ENCODE measurements at regions of chr7 and their contacts with region 1.

Region 1: DNA sequence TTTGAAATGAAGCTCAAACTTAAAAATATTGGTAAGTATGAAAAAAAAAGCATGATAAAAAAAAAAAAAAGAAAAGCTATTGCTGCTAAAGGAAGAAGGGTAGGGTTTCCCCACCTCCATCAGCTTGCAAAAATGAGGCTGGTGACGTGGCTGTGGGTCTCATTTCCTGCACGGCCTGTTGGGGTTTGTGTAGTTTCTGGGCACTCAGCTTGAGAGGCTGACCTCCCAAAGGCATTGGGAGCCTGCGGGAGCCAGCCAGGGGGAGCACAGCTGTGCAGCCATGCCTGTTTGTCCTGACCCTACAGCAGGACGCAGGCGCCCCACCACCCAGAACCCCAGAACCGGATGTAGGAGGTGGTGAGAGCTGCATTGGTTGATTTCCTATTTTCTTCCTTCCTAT is 48.8 kb upstream of the CARD11 start:
- DNase-seq: peak; percentile 35 to 87 (median 82)
- ATAC-seq: peak; percentile 87
- H3K4me3 ChIP-seq: peak overlapping the region; percentile 4
- H3K4me3 Mint-ChIP-seq: peak overlapping the region; percentile 43 to 94 (median 72)
- H3K27ac ChIP-seq: peak overlapping the region; percentile 81
- H3K27ac Mint-ChIP-seq: peak overlapping the region; percentile 93 to 100 (median 99)
- H3K4me1 ChIP-seq: peaks cover 68 to 76% of the 10 kb centered on the region in 2 donors
- H3K4me1 Mint-ChIP-seq: peaks cover 35 to 86% (median 72%) of the 10 kb centered on the region in 7 donors
- H3K27me3 ChIP-seq: no peaks in the 10 kb centered on the region
- H3K27me3 Mint-ChIP-seq: peaks cover 0 to 2% (median 0%) of the 10 kb centered on the region in 5 donors

Region 2: GRCh38 chr7:2903682-2904162 is 188.7 kb before region 1 on chr7:
- CTCF ChIA-PET with region 1: no interaction called
- POLR2A ChIA-PET with region 1: no interaction called
- intact Hi-C with region 1: loop called in 1 of 2 experiments (anchors 1 kb)
- DNase-seq: no peak
- ATAC-seq: peak; percentile 10
- H3K4me3 ChIP-seq: no peak overlapping the region
- H3K4me3 Mint-ChIP-seq: no peak overlapping the region
- H3K27ac ChIP-seq: no peak overlapping the region
- H3K27ac Mint-ChIP-seq: peak overlapping the region in 4 of 9 donors; percentile 47 to 78 (median 65)
- H3K4me1 ChIP-seq: peaks cover 0 to 19% of the 10 kb centered on the region in 2 donors
- H3K4me1 Mint-ChIP-seq: peaks cover 0 to 40% (median 2%) of the 10 kb centered on the region in 7 donors
- H3K27me3 ChIP-seq: no peaks in the 10 kb centered on the region
- H3K27me3 Mint-ChIP-seq: no peaks in the 10 kb centered on the region

Region 3: DNA sequence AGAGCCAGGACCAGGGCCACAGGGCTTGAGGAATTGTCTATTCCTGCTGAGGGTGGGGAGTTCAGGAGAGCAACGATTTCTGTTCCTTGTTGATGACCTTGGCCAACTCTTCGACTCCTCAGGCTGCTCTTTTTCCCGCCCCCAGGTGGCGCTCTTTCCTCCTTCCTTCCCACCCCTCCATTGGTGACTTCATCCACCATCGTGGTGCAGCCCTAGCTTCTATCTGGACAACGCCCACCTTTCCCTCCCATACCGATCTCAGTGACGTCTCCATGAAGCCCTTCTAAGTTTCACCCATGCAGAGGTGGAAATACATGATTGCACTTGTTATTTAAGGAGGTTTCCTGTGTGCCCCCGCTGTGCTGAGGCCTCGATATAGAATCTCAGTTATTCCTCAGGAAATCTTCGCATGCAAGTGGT is 26.7 kb before region 1 on chr7:
- CTCF ChIA-PET with region 1: interaction called, 13 read pairs
- POLR2A ChIA-PET with region 1: interaction called, 31 read pairs
- intact Hi-C with region 1: loop called (anchors 1 to 2 kb)
- DNase-seq: peak; percentile 32 to 61 (median 50)
- ATAC-seq: peak; percentile 58
- H3K4me3 ChIP-seq: peak overlapping the region; percentile 28
- H3K4me3 Mint-ChIP-seq: peak overlapping the region; percentile 56 to 85 (median 72)
- H3K27ac ChIP-seq: peak overlapping the region; percentile 54
- H3K27ac Mint-ChIP-seq: peak overlapping the region; percentile 68 to 98 (median 91)
- H3K4me1 ChIP-seq: peaks cover 63 to 78% of the 10 kb centered on the region in 2 donors
- H3K4me1 Mint-ChIP-seq: peaks cover 65 to 83% (median 80%) of the 10 kb centered on the region in 7 donors
- H3K27me3 ChIP-seq: no peaks in the 10 kb centered on the region
- H3K27me3 Mint-ChIP-seq: no peaks in the 10 kb centered on the region

Region 4: DNA sequence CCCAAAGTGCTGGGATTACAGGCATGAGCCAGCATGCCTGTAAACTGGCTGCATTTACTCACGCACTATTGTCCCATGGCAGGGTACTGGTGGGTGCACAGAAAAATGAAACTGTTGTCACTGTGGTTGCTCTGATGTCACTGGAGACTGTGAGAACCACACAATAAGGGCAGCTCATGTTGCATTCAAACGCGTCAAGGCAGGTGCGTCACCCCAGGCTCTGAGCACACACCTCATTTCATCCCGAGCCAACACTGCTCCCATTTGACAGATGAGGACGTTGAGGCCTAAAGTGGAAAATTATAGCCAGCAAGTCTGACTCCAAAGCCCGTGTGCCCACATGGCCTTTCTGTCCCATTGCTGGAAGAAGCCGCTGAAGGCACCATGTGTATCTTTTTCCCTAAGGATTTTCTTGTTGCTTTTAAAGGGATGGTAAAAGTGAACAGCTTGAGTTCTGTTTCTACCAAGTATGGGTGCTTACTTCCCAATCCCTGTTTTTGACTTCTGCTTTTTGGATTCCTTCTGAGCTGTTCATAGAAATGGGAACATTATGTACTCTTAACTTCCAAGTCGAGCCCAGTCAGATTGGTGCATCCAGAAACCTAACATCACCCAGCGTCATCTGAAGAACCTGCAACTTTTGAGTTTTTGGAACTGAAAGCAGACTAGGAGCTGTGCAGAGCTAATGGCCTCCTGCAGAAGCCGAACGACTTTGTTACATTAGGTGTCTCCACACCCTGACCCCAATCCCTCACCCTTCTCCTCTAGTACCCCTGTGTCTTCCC is 11.3 kb after region 1 on chr7:
- CTCF ChIA-PET with region 1: interaction called, 5 read pairs
- POLR2A ChIA-PET with region 1: interaction called, 20 read pairs
- intact Hi-C with region 1: loop called (anchors 1 to 2 kb)
- DNase-seq: peak in 1 of 9 donors; percentile 20
- ATAC-seq: peak; percentile 81
- H3K4me3 ChIP-seq: no peak overlapping the region
- H3K4me3 Mint-ChIP-seq: peak overlapping the region in 3 of 10 donors; percentile 27 to 55 (median 44)
- H3K27ac ChIP-seq: no peak overlapping the region
- H3K27ac Mint-ChIP-seq: peak overlapping the region in 7 of 9 donors; percentile 5 to 79 (median 69)
- H3K4me1 ChIP-seq: peaks cover 17 to 29% of the 10 kb centered on the region in 2 donors
- H3K4me1 Mint-ChIP-seq: peaks cover 23 to 79% (median 62%) of the 10 kb centered on the region in 7 donors
- H3K27me3 ChIP-seq: no peaks in the 10 kb centered on the region
- H3K27me3 Mint-ChIP-seq: no peaks in the 10 kb centered on the region

Region 5: DNA sequence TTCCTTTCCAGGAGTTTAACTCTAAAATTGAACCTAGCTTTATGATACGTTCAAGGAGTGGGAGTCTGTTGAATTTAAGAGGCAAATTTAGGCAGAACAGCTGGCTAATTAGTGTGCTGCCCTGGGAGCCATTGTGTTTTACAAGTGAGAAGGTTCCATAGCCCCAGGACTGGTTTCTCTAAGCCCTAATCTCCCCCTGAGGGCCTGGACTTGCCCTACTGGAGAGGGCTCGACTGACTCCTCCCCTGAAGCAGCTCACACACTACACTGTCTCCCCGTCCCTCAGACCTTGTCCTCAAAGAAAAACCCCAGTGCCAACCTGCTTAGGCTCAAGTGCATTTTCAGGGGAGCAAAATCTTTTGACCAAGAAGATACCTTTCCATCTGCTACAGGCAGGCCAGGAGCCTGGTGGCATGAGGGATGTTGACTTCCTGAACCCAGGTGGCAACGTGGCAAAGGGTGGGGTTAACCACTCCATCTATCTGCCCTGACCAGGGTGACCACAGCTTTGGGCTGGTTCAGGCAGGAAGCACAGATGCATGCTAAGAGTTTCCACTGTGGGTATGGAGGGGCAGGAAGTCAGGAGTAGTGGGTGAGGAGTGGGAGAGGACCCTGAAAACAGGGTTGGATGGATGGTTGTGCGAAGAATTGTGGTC is 20.1 kb after region 1 on chr7:
- CTCF ChIA-PET with region 1: interaction called, 9 read pairs
- POLR2A ChIA-PET with region 1: interaction called, 59 read pairs
- intact Hi-C with region 1: loop called in 1 of 2 experiments (anchors 2 kb)
- DNase-seq: peak in 1 of 9 donors; percentile 45
- ATAC-seq: peak; percentile 52
- H3K4me3 ChIP-seq: no peak overlapping the region
- H3K4me3 Mint-ChIP-seq: peak overlapping the region in 7 of 10 donors; percentile 0 to 72 (median 21)
- H3K27ac ChIP-seq: no peak overlapping the region
- H3K27ac Mint-ChIP-seq: peak overlapping the region in 7 of 9 donors; percentile 21 to 74 (median 46)
- H3K4me1 ChIP-seq: peaks cover 13 to 46% of the 10 kb centered on the region in 2 donors
- H3K4me1 Mint-ChIP-seq: peaks cover 29 to 74% (median 56%) of the 10 kb centered on the region in 7 donors
- H3K27me3 ChIP-seq: no peaks in the 10 kb centered on the region
- H3K27me3 Mint-ChIP-seq: no peaks in the 10 kb centered on the region

Region 6: DNA sequence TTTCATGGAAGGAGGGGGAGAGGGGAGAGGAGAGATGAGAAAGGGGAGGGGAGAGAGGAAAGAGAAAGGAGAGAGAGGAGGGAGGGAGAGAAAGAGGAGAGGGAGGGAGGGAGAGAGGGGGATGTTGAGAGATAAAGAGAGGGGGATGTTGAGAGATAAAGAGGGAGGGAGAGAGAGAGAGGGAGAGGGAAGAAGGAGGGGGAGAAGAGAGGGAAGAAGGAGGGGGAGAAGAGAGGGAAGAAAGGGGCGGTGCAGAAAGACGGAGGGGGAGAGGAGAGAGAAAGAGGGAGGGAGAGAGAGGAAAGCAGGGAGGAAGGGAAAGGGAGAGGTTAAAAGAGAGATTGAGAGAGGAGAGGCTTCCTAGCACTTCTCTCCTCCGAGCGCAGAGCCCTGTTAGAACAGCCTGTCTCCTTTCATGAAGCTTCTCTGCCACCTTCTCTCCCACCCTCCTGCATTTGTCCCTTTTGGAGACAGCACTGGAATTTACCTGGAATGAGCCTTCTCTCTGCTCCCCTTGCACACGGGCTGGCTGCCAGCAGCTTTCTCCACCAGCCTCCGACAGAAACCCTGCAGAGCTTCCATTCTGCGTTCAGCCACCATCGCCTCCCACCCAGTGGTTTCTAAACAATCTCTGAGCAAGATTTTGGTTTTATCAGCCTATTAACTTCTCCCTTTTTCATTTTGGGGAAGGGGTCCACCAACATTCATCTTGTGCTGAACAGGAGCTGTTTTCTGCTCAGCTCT is 25.2 kb after region 1 on chr7:
- CTCF ChIA-PET with region 1: interaction called, 9 read pairs
- POLR2A ChIA-PET with region 1: interaction called, 59 read pairs
- intact Hi-C with region 1: loop called in 1 of 2 experiments (anchors 1 kb)
- DNase-seq: peak in 6 of 9 donors; percentile 15 to 49 (median 30)
- ATAC-seq: peak; percentile 64
- H3K4me3 ChIP-seq: peak overlapping the region; percentile 28
- H3K4me3 Mint-ChIP-seq: peak overlapping the region in 9 of 10 donors; percentile 75 to 91 (median 84)
- H3K27ac ChIP-seq: peak overlapping the region; percentile 43
- H3K27ac Mint-ChIP-seq: peak overlapping the region in 7 of 9 donors; percentile 72 to 96 (median 92)
- H3K4me1 ChIP-seq: peaks cover 20 to 47% of the 10 kb centered on the region in 2 donors
- H3K4me1 Mint-ChIP-seq: peaks cover 36 to 63% (median 59%) of the 10 kb centered on the region in 7 donors
- H3K27me3 ChIP-seq: no peaks in the 10 kb centered on the region
- H3K27me3 Mint-ChIP-seq: no peaks in the 10 kb centered on the region

Measured in naive thymus-derived CD4-positive, alpha-beta T cell (primary cell).